Caco-2 (cell line): ENCODE measurements at regions of chr15 and their contacts with region 1.

Region 1: DNA sequence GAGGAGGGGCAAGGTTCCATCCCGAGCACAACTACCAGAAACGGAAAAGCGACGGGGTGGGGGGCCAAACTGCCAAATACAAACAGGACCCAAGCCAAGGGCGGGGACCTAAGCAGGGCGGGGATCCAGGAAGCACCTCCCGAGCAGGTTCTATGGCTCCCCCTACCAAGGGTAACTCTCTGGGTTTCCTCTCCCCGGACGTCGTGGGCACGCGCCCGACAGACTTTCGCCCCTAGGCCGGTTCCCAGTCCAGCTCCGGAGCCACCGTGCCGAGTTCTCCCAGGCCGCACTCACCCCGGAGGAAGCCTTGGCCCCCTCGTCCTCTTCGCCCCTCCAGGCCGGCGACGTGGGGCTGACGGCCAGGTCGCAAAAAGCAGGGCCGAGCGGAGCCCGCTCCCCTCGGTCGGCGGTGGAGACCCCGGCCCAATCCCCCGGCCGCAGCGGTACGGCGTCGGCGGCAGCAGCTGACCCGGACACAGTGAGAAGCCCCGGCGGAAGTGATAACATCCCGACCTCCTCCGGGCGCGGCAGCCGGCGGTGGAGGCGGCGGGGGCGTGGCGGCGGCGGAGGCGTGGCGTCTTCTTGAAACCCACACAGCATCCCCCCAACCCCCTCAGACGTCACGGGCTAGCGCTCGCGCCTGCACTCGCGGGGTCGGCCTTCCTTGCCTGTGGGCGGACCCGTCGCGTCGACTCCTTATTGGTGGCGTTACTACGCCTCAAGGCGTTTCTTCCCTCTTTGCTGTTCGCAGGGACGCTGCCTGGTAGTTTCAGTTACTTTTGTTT is at the start of gene BNIP2:
- DNase-seq: peak; percentile 98 to 99
- H3K4me3 ChIP-seq: peak within 1 kb of the TSS; percentile 99
- H3K4me3 Mint-ChIP-seq: peak within 1 kb of the TSS; percentile 87
- H3K27ac Mint-ChIP-seq: peak within 1 kb of the TSS; percentile 90
- H3K4me1 ChIP-seq: 0 out of 2 replicates have a peak, but pooled peaks cover 4% of the 10 kb centered on the region
- H3K4me1 Mint-ChIP-seq: peaks cover 14% of the 10 kb centered on the region
- H3K27me3 ChIP-seq: no peaks in the 10 kb centered on the region
- H3K27me3 Mint-ChIP-seq: no peaks in the 10 kb centered on the region
- CTCF ChIP-seq: no peak
- total RNA-seq, gene BNIP2: 54.0 and 56.0 TPM in 2 replicates

Region 2: GRCh38 chr15:59725172-59725486 is 36.1 kb after region 1 on chr15:
- CTCF ChIA-PET with region 1: no interaction called
- POLR2A ChIA-PET with region 1: no interaction called
- intact Hi-C with region 1: loop called (anchors 2 kb)
- DNase-seq: no peak
- H3K4me3 ChIP-seq: no peak overlapping the region
- H3K4me3 Mint-ChIP-seq: no peak overlapping the region
- H3K27ac Mint-ChIP-seq: no peak overlapping the region
- H3K4me1 ChIP-seq: no peaks in the 10 kb centered on the region
- H3K4me1 Mint-ChIP-seq: no peaks in the 10 kb centered on the region
- H3K27me3 ChIP-seq: no peaks in the 10 kb centered on the region; the same call in 1 of the 2 replicates
- H3K27me3 Mint-ChIP-seq: peaks cover 13% of the 10 kb centered on the region
- CTCF ChIP-seq: no peak